ENCODE measurements at regions of chr13 and their contacts with region 1.

Region 1: DNA sequence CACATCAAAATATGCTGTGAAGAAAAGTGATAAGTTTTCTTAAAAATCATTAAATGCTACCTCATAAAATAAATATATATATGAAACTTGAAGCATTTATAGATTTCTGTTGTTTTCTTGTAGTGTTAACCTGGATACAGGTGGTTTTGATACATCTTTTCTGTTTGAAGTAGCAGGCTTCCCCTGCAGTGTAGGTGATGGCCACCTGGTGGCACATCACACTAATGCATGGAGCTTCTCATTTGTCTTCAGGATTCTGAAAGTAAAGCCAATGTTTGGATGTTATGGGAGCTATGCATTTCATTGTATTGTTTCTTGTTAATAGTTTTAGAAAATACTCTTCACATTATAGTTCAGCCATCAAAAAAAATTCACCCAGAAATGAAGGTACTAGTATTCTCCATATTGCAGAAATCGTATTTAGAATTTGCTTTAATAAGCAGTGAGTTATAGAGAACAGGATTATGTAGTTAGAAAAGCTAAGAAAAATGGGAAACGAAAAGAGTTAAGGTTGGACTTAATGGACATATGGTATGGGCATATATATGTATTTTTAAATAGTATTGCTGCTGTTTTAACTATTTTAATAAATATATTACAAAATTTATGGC is 18.7 kb downstream of the GPR180 start:
- DNase-seq: peak; percentile 34 to 66 (median 61)
- H3K4me3 ChIP-seq: no peak overlapping the region
- H3K27ac ChIP-seq: no peak overlapping the region
- H3K4me1 ChIP-seq: no peaks in the 10 kb centered on the region
- H3K27me3 ChIP-seq: no peaks in the 10 kb centered on the region

Region 2: GRCh38 chr13:94327318-94327717 is 293.1 kb before region 1 on chr13:
- CTCF ChIA-PET with region 1: no interaction called
- POLR2A ChIA-PET with region 1: no interaction called
- DNase-seq: peak in 2 of 3 donors; percentile 37 to 51
- H3K4me3 ChIP-seq: peak overlapping the region in 3 of 7 experiments; percentile 21 to 33 (median 32)
- H3K27ac ChIP-seq: no peak overlapping the region
- H3K4me1 ChIP-seq: peaks cover 17 to 32% (median 25%) of the 10 kb centered on the region in 4 experiments
- H3K27me3 ChIP-seq: no peaks in the 10 kb centered on the region

Region 3: GRCh38 chr13:94435604-94436226 is 184.7 kb before region 1 on chr13:
- CTCF ChIA-PET with region 1: interaction called, 218 read pairs
- POLR2A ChIA-PET with region 1: no interaction called
- DNase-seq: peak; percentile 59 to 74 (median 67)
- H3K4me3 ChIP-seq: no peak overlapping the region
- H3K27ac ChIP-seq: no peak overlapping the region
- H3K4me1 ChIP-seq: peaks cover 0 to 7% (median 1%) of the 10 kb centered on the region in 4 experiments
- H3K27me3 ChIP-seq: peaks cover 0 to 9% (median 0%) of the 10 kb centered on the region in 5 experiments

Region 4: GRCh38 chr13:94549232-94550061 is 70.9 kb before region 1 on chr13:
- CTCF ChIA-PET with region 1: interaction called, 20 read pairs
- POLR2A ChIA-PET with region 1: no interaction called
- DNase-seq: peak; percentile 93 to 95 (median 95)
- H3K4me3 ChIP-seq: peak overlapping the region; percentile 73 to 96 (median 91)
- H3K27ac ChIP-seq: peak overlapping the region; percentile 68 to 86
- H3K4me1 ChIP-seq: peaks cover 4 to 20% (median 15%) of the 10 kb centered on the region in 4 experiments
- H3K27me3 ChIP-seq: peaks cover 0 to 2% (median 0%) of the 10 kb centered on the region in 5 experiments

Region 5: DNA sequence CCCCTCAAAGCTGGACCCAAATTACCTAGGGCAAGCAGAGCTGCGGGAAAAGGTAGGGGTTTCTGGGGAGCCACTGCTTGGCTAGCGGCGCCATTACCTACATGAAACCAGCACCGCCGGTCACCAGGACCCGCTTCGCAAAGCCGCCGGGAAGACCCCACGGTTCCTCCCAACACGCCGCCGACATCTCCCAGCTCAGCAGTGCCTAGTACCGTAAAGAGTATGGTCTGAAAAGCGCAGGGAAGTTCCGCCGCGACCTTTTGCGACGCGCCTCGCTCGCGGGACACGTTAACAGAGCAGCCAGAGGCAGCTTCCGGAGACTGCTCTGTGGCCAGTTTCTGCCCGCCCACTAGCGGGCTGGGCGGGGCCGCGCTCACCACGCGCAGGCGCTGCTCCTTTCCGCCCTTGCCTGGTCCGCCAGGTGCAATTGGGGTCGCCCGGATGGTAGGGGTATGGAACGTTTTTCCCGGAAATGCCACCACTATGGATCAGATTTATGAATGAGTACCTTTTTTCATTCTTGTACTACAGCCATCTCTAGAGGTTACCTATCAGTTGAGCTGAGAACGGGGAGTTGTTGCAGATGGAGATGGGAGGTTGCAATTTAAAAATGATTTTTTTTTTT is 24.3 kb before region 1 on chr13 and contains the start of gene TGDS:
- CTCF ChIA-PET with region 1: interaction called, 35 read pairs
- POLR2A ChIA-PET with region 1: no interaction called
- DNase-seq: peak; percentile 95 to 97 (median 95)
- H3K4me3 ChIP-seq: peak within 1 kb of the TSS; percentile 84 to 100 (median 93)
- H3K27ac ChIP-seq: peak within 1 kb of the TSS; percentile 67 to 90
- H3K4me1 ChIP-seq: peaks cover 8 to 25% (median 17%) of the 10 kb centered on the region in 4 experiments
- H3K27me3 ChIP-seq: no peaks in the 10 kb centered on the region

Region 6: GRCh38 chr13:94601446-94602431 is 18.7 kb before region 1 on chr13 and contains the start of gene GPR180:
- CTCF ChIA-PET with region 1: interaction called, 35 read pairs
- POLR2A ChIA-PET with region 1: no interaction called
- DNase-seq: peak; percentile 97 to 98 (median 98)
- H3K4me3 ChIP-seq: peak within 1 kb of the TSS; percentile 71 to 95 (median 82)
- H3K27ac ChIP-seq: peak within 1 kb of the TSS in 1 of 2 experiments; percentile 64
- H3K4me1 ChIP-seq: peaks cover 0 to 19% (median 7%) of the 10 kb centered on the region in 4 experiments
- H3K27me3 ChIP-seq: no peaks in the 10 kb centered on the region

Region 7: GRCh38 chr13:94630858-94631257 is 10.5 kb after region 1 on chr13:
- CTCF ChIA-PET with region 1: interaction called, 22 read pairs
- POLR2A ChIA-PET with region 1: no interaction called
- DNase-seq: no peak
- H3K4me3 ChIP-seq: no peak overlapping the region
- H3K27ac ChIP-seq: no peak overlapping the region
- H3K4me1 ChIP-seq: no peaks in the 10 kb centered on the region
- H3K27me3 ChIP-seq: no peaks in the 10 kb centered on the region

Region 8: DNA sequence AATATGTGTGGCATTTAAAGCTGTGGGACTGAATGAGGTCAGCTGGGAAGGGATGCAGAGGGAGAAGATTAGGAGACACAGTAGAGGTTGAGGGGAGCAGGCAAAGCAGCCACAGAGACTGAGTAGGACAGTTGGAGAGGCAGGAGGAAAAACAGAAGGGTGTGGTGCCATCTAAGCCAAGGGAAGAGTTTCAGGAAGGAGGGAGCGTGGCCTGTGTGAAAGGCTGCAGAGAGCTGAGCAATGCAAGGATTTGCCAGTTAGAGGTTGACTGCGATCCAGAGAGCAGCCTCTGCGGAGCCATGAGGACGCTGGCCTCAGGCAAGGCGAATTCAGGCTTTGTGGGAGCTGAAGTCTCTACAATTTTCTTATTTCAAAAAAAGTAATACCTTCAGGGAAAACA is 63.0 kb after region 1 on chr13:
- CTCF ChIA-PET with region 1: no interaction called
- POLR2A ChIA-PET with region 1: no interaction called
- DNase-seq: no peak
- H3K4me3 ChIP-seq: no peak overlapping the region
- H3K27ac ChIP-seq: no peak overlapping the region
- H3K4me1 ChIP-seq: no peaks in the 10 kb centered on the region
- H3K27me3 ChIP-seq: peaks cover 0 to 11% (median 3%) of the 10 kb centered on the region in 5 experiments

Region 9: GRCh38 chr13:95156208-95156607 is 535.8 kb after region 1 on chr13:
- CTCF ChIA-PET with region 1: interaction called, 17 read pairs
- POLR2A ChIA-PET with region 1: no interaction called
- DNase-seq: peak; percentile 35 to 57 (median 55)
- H3K4me3 ChIP-seq: no peak overlapping the region
- H3K27ac ChIP-seq: no peak overlapping the region
- H3K4me1 ChIP-seq: no peaks in the 10 kb centered on the region
- H3K27me3 ChIP-seq: no peaks in the 10 kb centered on the region